ENCODE measurements at regions of chr16 and their contacts with region 1.

Region 1: GRCh38 chr16:81519298-81520150 is 74.9 kb downstream of the CMIP start:
- DNase-seq: no peak
- H3K4me3 ChIP-seq: no peak overlapping the region
- H3K27ac ChIP-seq: no peak overlapping the region
- H3K4me1 ChIP-seq: no peaks in the 10 kb centered on the region
- H3K27me3 ChIP-seq: no peaks in the 10 kb centered on the region
- CTCF ChIP-seq: no peak

Region 2: DNA sequence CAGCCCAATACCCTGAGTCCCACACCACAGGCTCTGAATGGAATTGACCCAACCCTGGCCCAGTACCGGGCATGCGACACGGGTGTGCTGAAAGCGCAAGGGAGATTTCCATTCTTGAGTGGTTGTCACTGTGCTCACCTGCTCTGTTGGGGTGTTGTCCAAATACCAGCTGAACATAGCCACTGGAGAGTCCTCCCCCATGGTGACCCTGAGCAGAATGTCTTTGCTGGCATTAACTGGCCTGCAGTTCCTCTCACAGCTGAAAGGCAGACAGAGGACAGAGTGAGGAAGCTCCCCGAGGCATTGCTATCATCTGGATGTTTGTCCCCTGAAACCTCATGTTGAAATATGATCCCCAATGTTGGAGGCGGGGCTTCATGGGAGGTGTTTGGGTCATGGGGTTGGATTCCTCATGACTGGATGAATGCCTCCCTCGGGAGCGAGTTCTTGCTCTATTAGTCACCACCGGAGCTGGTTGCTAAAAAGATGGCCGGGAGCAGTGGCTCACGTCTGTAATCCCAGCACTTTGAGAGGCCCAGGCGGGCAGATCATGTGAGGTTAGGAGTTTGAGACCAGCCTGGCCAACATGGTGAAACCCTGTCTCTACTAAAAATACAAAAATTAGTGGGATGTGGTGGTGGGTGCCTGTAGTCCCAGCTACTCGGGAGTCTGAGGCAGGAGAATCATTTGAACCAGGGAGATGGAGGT is 338.4 kb before region 1 on chr16:
- CTCF ChIA-PET with region 1: no interaction called
- POLR2A ChIA-PET with region 1: no interaction called
- intact Hi-C with region 1: no loop called
- DNase-seq: peak; percentile 97
- H3K4me3 ChIP-seq: no peak overlapping the region
- H3K27ac ChIP-seq: peak overlapping the region; percentile 16
- H3K4me1 ChIP-seq: peaks cover 7% of the 10 kb centered on the region
- H3K27me3 ChIP-seq: no peaks in the 10 kb centered on the region
- CTCF ChIP-seq: no peak

Region 3: DNA sequence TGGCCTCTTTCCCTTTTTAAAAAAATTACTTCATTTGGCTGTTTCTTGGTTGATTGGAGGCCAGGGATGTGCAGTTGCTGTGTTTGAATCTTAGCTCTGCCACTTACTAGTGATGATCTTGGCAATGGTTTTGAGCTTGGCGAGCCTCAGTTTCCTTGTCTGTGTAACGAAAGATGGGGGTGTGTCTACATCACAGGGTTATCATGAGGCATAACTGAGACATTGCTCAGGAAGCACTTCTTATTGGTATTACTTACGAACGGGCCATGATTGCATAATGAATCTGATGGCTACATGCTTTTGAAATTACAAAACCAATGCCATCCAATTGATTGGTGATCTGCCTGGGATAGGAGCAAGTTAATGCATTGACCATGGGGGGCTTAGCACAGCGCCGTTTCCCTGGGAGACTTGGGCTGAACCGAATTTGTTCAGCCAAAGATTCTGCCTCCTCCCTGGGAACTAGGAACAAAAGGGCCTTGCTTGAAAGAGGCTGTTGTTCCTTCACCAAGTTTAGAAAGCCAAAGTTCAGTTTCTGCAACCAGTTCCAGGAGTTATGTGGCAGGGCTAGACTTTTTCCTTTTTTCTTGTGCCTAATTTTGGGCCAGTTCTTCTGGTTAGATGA is 53.1 kb before region 1 on chr16:
- CTCF ChIA-PET with region 1: no interaction called
- POLR2A ChIA-PET with region 1: no interaction called
- intact Hi-C with region 1: no loop called
- DNase-seq: no peak
- H3K4me3 ChIP-seq: no peak overlapping the region
- H3K27ac ChIP-seq: no peak overlapping the region
- H3K4me1 ChIP-seq: no peaks in the 10 kb centered on the region
- H3K27me3 ChIP-seq: no peaks in the 10 kb centered on the region
- CTCF ChIP-seq: no peak

Region 4: DNA sequence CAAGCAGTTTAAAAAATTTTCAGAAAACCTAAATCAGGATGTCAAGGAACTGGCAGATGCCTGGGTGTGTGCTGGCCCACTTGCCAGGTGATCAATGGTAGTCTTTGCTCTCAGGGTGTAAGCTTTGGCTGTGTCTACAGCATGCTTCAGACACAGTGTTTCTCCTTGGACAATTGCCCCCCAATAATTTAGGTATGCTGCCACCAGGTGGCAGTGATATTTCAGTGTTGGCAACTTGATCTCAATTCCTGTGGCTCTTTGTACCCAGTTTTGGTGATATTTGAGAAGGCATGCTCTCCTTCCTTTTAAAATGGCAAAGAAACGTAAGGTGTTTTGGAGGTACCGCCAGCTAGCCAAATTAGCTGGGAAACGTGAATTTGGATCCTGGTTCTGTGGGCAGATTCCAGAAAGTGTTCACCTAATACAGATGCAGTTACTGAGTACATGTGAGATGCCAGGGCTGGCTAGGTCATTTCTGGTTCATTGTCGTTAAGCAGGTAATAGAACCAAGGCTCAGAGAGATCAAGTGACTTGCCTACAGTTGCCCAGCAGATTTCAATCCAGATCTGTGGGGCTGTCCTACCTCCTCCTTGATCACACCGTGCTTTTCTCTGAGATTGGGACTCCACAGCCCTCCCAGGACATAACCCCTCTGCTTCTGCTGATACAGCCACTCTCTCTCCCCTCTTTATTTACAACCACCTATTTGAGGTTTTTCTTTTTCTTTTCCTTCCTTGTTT is 104.0 kb after region 1 on chr16:
- CTCF ChIA-PET with region 1: no interaction called
- POLR2A ChIA-PET with region 1: interaction called, 11 read pairs
- intact Hi-C with region 1: no loop called
- DNase-seq: peak; percentile 60
- H3K4me3 ChIP-seq: no peak overlapping the region
- H3K27ac ChIP-seq: no peak overlapping the region
- H3K4me1 ChIP-seq: no peaks in the 10 kb centered on the region
- H3K27me3 ChIP-seq: no peaks in the 10 kb centered on the region
- CTCF ChIP-seq: peak; percentile 68